Psoas muscle (tissue), 8 donors: ENCODE measurements at regions of chr16 and their contacts with region 1.

Region 1: GRCh38 chr16:24504472-24505345 is 34.7 kb upstream of the RBBP6 start:
- DNase-seq: peak in 1 of 2 donors; percentile 53
- ATAC-seq: peak; percentile 57 to 77 (median 60)
- H3K4me3 ChIP-seq: no peak overlapping the region
- H3K27ac ChIP-seq: no peak overlapping the region
- H3K4me1 ChIP-seq: peaks cover 10% of the 10 kb centered on the region
- H3K27me3 ChIP-seq: no peaks in the 10 kb centered on the region
- CTCF ChIP-seq: peak; percentile 69

Region 2: DNA sequence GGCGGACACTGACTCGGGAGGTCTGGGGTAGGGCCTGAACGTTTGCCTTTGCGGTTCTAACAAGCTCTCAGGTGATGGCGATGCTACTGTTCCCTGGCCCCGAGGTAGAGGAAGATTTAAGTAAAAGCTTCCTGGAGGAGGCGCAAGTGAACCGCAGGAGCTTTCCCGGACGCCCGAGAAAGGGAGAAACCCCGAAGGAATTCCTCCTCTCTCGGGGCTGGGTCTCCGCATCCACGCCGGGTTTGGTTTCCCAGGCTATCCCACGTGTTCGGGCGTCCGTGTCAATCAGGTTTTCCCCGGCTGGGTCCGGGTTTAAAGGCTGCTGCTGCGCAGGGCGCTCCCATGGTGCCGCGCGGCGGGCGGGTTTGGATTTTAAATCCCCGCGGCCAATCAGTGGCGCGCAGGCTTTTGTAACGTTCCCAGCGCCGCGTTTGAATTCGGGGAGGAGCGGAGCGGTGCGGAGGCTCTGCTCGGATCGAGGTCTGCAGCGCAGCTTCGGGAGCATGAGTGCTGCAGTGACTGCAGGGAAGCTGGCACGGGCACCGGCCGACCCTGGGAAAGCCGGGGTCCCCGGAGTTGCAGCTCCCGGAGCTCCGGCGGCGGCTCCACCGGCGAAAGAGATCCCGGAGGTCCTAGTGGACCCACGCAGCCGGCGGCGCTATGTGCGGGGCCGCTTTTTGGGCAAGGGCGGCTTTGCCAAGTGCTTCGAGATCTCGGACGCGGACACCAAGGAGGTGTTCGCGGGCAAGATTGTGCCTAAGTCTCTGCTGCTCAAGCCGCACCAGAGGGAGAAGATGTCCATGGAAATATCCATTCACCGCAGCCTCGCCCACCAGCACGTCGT is 826.1 kb before region 1 on chr16 and contains the start of gene PLK1:
- intact Hi-C with region 1: loop called in 1 of 2 experiments (anchors 10 kb)
- DNase-seq: peak; percentile 77 to 83
- ATAC-seq: peak; percentile 87 to 96 (median 90)
- H3K4me3 ChIP-seq: peak within 1 kb of the TSS; percentile 65
- H3K27ac ChIP-seq: no peak within 1 kb of the TSS
- H3K4me1 ChIP-seq: peaks cover 4% of the 10 kb centered on the region
- H3K27me3 ChIP-seq: no peaks in the 10 kb centered on the region
- CTCF ChIP-seq: peak; percentile 8
- total RNA-seq, gene PLK1: 0.58 to 0.98 (median 0.82) TPM

Region 3: DNA sequence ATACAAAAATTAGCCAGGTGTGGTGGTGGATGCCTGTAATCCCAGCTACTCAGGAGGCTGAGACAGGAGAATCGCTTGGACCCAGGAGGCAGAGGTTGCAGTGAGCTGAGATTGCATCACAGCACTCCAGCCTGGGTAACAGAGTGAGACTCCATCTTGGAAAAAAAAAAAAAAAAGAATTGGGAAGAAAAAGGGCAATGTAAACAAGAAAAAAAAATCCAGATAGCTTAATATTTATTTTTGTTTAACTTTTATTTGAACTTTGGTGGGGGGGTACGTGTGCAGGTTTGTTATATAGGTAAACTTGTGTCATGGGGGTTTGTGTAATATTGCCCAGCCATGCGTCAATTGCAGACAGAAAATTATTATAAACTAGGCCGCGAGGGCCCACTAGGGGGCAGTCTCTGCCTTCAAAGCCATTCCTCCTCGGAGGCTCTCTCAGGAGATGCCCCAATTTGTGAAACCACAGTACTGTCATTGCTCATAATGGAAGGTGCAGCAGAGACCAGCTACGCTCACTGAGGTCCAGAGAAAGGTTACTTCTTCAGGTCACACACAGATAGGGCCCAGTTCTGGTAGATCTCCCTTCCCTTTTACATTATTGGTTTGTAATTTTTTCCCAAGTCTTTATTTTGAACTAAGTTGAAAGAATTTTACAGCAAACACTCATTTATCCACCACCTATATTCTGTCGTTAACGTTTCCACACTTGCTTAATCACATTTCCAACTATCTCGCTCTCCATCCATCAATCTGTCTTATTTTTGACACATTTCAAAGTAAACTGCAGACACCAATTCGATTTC is 462.7 kb before region 1 on chr16:
- intact Hi-C with region 1: loop called in 1 of 2 experiments (anchors 5 kb)
- DNase-seq: peak in 1 of 2 donors; percentile 31
- ATAC-seq: no peak
- H3K4me3 ChIP-seq: no peak overlapping the region
- H3K27ac ChIP-seq: no peak overlapping the region
- H3K4me1 ChIP-seq: no peaks in the 10 kb centered on the region
- H3K27me3 ChIP-seq: no peaks in the 10 kb centered on the region
- CTCF ChIP-seq: peak; percentile 36